ENCODE measurements at regions of chr5 and their contacts with region 1.

Region 1: GRCh38 chr5:102865510-102866236 is 110.6 kb downstream of the PAM start:
- H3K4me3 Mint-ChIP-seq: peak overlapping the region; percentile 83
- H3K27ac Mint-ChIP-seq: peak overlapping the region; percentile 79
- H3K4me1 Mint-ChIP-seq: peaks cover 8% of the 10 kb centered on the region
- H3K27me3 Mint-ChIP-seq: peaks cover 9% of the 10 kb centered on the region

Region 2: DNA sequence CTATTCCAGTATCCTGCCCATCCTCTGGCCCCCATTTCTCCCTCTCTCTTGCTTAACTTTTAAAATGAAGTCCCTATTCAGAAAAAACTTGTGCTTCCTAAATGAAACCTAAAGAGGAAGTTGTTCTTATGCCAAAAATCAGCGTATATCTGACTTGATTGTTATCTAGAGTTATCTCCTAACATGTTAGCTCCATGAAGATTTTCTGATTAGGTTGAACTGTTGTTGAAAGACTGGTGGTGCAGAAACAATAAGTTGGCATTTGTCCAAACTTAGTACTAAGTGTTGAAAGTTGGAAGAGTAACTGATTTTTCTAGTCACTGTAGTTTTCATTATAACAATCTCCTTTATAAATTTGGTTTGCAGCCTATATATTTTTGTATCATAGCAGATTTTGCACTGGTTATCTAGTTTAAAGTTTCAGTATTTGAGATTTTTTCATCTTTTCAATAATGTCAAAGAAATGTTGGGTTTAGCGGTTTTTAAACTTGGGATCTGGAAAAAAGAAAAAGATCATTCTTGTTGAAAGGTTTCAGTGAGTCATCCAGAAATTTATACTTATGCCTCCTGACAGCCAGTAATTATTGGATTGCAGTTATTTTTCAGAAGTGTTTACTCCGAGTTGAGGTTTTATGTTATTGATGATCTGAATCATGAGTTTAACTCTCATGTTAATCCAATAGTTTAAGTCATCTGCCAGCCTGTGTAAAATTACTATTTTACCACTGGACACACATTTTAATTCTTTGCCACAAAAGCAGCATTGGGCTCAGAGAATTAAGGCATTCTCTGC is 49.9 kb before region 1 on chr5:
- intact Hi-C with region 1: loop called (anchors 5 kb)
- H3K4me3 Mint-ChIP-seq: no peak overlapping the region
- H3K27ac Mint-ChIP-seq: no peak overlapping the region
- H3K4me1 Mint-ChIP-seq: peaks cover 23% of the 10 kb centered on the region
- H3K27me3 Mint-ChIP-seq: no peaks in the 10 kb centered on the region

Region 3: DNA sequence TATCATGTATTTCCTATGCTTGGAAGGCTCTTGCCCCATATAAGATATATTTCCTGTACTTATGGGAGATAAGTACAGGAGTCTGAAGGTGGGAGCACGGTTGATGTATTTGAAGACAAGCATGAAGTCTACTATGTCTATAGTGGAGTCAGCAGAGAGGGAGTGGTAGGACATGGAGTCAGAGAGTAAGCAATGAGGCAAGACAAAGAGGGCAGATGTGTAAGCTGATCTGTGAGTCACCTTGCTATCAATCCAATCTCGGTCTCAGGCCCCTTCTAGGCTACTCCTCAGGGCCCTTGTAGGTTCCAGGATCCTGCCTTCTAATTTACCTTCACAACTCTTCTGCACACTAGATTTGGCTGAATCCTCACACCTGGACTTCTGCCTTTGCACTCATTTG is 498.4 kb after region 1 on chr5:
- intact Hi-C with region 1: no loop called
- H3K4me3 Mint-ChIP-seq: no peak overlapping the region
- H3K27ac Mint-ChIP-seq: no peak overlapping the region
- H3K4me1 Mint-ChIP-seq: no peaks in the 10 kb centered on the region
- H3K27me3 Mint-ChIP-seq: no peaks in the 10 kb centered on the region

Measured in dendritic cell treated with granulocyte-macrophage colony-stimulating factor and Interleukin-4, amounts not matched to agents 40 ng/mL and 50 ng/mL, for 4 days (primary cell).